Heart left ventricle (tissue), 16 donors: ENCODE measurements at regions of chr3 and their contacts with region 1.

Region 1: DNA sequence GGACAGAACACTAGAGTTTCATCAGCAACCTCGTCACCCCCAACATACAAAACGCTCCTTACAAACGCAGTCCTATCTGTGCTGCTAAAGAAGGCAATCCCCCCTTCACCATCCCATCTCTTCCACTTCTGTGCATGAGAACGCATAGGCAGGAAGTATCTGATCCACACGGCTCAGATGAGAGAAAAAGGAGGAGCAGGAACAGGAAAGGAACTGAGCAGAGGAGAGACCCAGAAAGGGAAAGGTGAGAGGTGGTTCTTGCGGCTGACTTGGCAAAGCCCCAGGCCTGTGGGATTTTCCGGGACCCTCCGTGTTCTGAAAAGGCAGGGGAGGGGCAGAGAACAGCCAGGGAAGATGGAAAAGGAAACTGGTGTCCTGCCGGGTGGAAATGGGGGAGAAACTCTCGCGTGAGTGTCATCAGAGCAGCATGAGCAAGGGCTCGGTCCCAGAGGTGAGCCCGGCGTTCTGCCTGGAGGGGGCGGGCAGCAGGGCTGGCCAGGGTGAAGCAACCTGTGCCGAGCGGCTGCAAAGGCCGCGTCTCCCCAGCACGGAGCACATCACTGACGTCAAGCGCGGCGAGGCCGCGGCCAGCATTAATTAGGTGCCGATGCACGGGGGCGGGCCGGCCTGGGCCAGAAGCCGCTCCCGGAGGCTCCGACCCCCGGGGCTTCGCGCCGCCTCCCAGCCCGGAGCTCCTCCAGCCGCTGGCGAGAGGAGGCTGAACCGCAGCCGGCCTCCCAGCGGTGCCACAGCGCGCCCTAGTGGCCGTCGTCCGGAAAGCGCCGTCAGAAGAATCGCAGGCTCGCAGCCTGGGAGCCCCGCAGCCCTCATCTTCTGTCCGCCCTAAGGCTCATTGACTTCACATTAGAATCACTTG is 35.8 kb downstream of the CPN2 start:
- DNase-seq: peak; percentile 83 to 92 (median 87)
- ATAC-seq: peak; percentile 61 to 91 (median 90)
- H3K4me3 ChIP-seq: peak overlapping the region; percentile 3 to 63 (median 50)
- H3K27ac ChIP-seq: peak overlapping the region in 6 of 12 donors; percentile 13 to 61 (median 32)
- H3K4me1 ChIP-seq: peaks cover 0 to 39% (median 19%) of the 10 kb centered on the region in 12 donors
- H3K27me3 ChIP-seq: peaks cover 0 to 54% (median 14%) of the 10 kb centered on the region in 9 donors
- CTCF ChIP-seq: peak; percentile 95 to 99 (median 98)
- POLR2A ChIP-seq: no peak

Region 2: DNA sequence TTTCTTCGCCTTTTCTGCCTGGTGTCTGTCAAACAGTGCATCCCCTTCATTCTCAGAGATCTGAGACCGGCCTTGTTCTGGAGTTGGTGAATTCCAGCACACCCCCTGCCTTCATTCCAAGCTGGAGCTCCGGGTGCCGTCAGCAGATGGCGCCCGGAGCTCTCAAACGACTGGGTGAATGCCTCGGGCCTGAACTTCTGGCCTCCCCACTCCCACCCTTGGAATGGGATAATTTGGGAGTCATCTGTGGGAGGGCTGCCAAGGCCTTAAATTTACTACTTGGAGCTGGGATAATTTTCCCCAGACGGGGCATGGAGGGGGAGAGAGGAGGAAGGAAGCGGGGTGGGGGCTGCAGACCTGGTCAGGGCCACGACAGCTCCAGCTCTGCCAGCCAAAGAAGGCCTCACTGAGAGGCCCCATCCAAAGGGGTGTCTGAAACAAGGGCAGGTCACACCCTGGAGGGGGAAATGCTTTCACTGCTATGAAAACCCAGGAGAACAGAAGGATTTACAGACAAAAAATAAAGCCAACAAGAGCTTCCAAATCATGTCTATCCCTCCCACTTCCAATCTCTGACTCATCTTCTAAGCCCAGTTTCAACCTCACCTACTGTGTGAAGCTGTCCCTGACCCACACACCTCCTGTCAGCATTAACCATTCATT is 534.4 kb before region 1 on chr3:
- intact Hi-C with region 1: loop called (anchors 1 to 5 kb)
- DNase-seq: peak; percentile 66 to 84 (median 78)
- ATAC-seq: peak; percentile 78 to 94 (median 91)
- H3K4me3 ChIP-seq: no peak overlapping the region
- H3K27ac ChIP-seq: peak overlapping the region in 1 of 12 donors; percentile 44
- H3K4me1 ChIP-seq: peaks cover 0 to 16% (median 7%) of the 10 kb centered on the region in 12 donors
- H3K27me3 ChIP-seq: peaks cover 0 to 61% (median 29%) of the 10 kb centered on the region in 9 donors
- CTCF ChIP-seq: peak; percentile 57 to 87 (median 80)
- POLR2A ChIP-seq: no peak

Region 3: GRCh38 chr3:193971261-193971751 is 344.0 kb before region 1 on chr3:
- intact Hi-C with region 1: loop called in 2 of 10 experiments (anchors 5 to 10 kb)
- DNase-seq: peak in 1 of 5 donors; percentile 43
- ATAC-seq: peak in 1 of 4 donors; percentile 24
- H3K4me3 ChIP-seq: no peak overlapping the region
- H3K27ac ChIP-seq: no peak overlapping the region
- H3K4me1 ChIP-seq: peaks cover 0 to 16% (median 0%) of the 10 kb centered on the region in 12 donors
- H3K27me3 ChIP-seq: peaks cover 0 to 10% (median 0%) of the 10 kb centered on the region in 9 donors
- CTCF ChIP-seq: no peak
- POLR2A ChIP-seq: no peak

Region 4: DNA sequence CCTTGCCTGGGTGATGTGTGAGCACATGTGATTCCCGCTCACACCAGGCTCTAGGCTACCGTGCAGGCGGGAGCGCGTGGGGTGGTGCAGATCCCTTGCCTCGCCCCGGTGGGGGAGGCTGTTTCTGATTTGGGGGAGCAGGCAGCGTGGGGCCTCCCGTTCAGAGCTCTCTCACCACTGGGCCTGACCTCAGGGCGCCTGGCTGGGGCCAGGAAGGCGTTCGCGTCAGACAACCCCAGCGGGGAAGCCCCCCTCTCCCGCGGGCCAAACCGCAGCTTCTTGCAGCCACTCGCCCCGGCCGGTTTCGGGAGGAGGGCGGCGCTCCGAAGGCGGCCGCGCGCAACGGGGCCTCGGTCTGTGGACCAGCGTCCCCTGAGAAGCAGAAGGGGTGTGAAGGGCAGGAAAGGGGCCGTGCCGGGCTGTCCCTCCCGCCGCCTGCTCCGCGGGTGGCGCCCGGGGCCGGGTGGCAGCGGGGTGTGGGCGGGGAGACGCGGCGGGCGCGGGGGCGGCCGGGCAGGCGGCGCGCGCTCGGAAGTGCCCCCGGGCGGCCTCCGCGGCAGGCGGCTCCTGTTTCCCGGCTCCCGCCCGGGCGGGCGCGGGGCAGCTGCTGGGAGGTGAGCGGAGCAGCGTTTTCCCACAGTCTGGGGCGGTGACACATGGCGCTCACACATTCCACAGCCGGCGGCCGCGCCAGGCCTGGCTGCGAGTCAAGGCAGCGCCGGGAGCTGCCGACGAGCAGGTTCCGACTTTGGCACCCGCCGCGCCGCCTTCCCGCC is 244.5 kb before region 1 on chr3:
- intact Hi-C with region 1: loop called in 1 of 10 experiments (anchors 5 kb)
- DNase-seq: peak; percentile 88 to 93 (median 93)
- ATAC-seq: peak; percentile 89 to 92 (median 92)
- H3K4me3 ChIP-seq: peak overlapping the region; percentile 8 to 64 (median 53)
- H3K27ac ChIP-seq: peak overlapping the region; percentile 67 to 97 (median 86)
- H3K4me1 ChIP-seq: peaks cover 3 to 23% (median 15%) of the 10 kb centered on the region in 12 donors
- H3K27me3 ChIP-seq: peaks cover 0 to 29% (median 0%) of the 10 kb centered on the region in 9 donors
- CTCF ChIP-seq: no peak
- POLR2A ChIP-seq: no peak

Region 5: DNA sequence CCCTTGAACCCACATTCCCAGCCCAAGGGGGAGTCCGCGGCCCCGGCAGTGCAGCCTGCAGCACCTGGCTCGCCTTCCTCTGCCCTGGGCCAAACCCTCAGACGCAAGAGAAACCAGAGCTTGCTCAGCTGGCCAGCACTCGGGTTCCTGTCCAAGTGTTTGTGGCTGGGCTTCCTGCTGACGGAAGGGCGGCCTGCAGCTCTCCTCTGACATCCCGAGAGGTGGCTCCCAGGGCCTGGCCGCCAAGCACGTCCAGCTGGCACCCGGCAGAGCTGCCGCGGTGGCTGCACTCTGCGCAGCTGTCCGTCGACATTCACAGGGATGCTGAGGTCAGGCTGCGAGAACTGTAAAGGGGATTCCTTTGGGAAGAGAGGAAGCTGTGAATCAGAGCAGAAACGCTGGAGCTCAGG is 49.8 kb before region 1 on chr3:
- intact Hi-C with region 1: loop called in 8 of 10 experiments (anchors 2 to 5 kb)
- DNase-seq: peak; percentile 93 to 97 (median 94)
- ATAC-seq: peak; percentile 80 to 88 (median 81)
- H3K4me3 ChIP-seq: peak overlapping the region in 4 of 12 donors; percentile 2 to 25 (median 6)
- H3K27ac ChIP-seq: peak overlapping the region in 11 of 12 donors; percentile 56 to 93 (median 80)
- H3K4me1 ChIP-seq: peaks cover 9 to 62% (median 47%) of the 10 kb centered on the region in 12 donors
- H3K27me3 ChIP-seq: no peaks in the 10 kb centered on the region
- CTCF ChIP-seq: peak in 1 of 12 donors; percentile 19
- POLR2A ChIP-seq: no peak

Region 6: DNA sequence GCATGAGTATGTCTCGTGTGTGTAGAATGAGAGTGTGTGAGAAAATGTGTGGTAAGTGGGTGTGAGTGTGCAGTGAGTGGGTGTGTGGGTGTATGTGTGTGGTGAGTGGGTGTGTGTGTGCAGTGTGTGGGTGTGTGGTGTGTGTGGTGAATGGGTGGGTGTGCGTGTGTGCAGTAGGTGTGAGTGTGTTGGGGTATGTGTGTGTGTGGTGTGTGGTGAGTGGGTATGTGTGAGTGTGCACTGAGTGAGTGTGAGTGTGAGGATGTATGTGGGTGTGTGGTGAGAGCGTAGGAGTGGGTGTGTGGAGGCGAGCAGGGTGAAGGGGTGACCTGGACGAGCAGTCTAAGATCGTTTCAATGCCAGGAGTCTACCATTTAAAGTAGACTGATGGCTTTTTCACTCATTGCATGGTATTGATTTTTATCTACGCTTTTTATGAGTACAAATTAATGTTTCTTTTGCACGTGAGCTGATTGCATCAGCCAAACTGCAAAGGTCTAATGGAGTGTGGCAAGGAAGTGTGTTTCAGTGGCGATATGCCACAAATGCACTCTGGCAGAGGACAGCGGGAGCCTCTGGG is 37.4 kb after region 1 on chr3:
- intact Hi-C with region 1: no loop called
- DNase-seq: no peak
- ATAC-seq: peak in 1 of 4 donors; percentile 10
- H3K4me3 ChIP-seq: no peak overlapping the region
- H3K27ac ChIP-seq: no peak overlapping the region
- H3K4me1 ChIP-seq: no peaks in the 10 kb centered on the region
- H3K27me3 ChIP-seq: peaks cover 0 to under 1% (median 0%) of the 10 kb centered on the region in 9 donors
- CTCF ChIP-seq: no peak
- POLR2A ChIP-seq: no peak

Region 7: DNA sequence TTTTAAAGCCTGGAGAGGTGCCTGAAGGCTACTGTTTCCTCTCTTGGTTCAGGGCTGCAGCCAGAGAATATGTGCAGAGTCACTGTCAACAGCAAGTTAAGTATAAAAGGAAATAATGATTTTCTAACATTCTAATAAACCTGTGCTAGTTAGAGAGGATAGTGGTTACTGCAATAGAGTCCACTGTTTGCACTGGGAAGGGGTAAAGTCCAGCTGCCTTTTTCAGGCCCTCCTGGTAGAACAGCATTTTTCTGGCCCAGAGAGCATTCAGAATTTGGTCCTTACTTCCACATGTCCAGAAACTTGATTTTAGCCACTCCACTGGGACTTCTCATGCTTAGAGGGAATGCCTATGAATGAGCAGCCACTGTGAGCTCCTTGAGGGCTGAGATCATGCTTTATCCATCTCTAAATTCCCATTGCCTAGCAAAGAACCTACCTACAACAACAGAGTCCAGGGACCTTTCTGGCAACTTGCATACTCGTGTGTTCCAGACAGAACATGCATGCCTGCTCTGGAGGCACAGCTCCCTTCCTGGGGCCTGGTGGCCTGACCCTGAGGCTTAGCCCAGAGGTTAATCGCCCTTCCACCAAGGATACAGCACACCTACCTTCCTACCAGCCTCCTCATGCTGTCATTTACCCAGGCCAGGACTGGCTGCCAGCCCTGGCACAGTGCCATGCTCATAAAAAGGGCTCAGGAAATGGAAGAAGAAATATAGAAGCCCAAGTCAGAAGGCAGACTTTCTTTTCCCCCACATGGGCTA is 221.7 kb after region 1 on chr3:
- intact Hi-C with region 1: no loop called
- DNase-seq: peak in 2 of 5 donors; percentile 35 to 37
- ATAC-seq: peak; percentile 15 to 71 (median 70)
- H3K4me3 ChIP-seq: no peak overlapping the region
- H3K27ac ChIP-seq: peak overlapping the region in 5 of 12 donors; percentile 2 to 49 (median 23)
- H3K4me1 ChIP-seq: peaks cover 0 to 21% (median 12%) of the 10 kb centered on the region in 12 donors
- H3K27me3 ChIP-seq: no peaks in the 10 kb centered on the region
- CTCF ChIP-seq: no peak
- POLR2A ChIP-seq: no peak